ENCODE measurements at regions of chr4 and their contacts with region 1.

Region 1: GRCh38 chr4:168486961-168487305 is 6.6 kb upstream of the DDX60L start:
- DNase-seq: no peak
- H3K4me3 Mint-ChIP-seq: no peak overlapping the region
- H3K27ac Mint-ChIP-seq: no peak overlapping the region
- H3K4me1 Mint-ChIP-seq: peaks cover 36% of the 10 kb centered on the region
- H3K27me3 Mint-ChIP-seq: no peaks in the 10 kb centered on the region

Region 2: GRCh38 chr4:168498251-168498650 is 11.3 kb after region 1 on chr4:
- CTCF ChIA-PET with region 1: interaction called, 11 read pairs
- POLR2A ChIA-PET with region 1: no interaction called
- DNase-seq: no peak
- H3K4me3 Mint-ChIP-seq: no peak overlapping the region
- H3K27ac Mint-ChIP-seq: no peak overlapping the region
- H3K4me1 Mint-ChIP-seq: peaks cover 10% of the 10 kb centered on the region
- H3K27me3 Mint-ChIP-seq: peaks cover 15% of the 10 kb centered on the region

Region 3: DNA sequence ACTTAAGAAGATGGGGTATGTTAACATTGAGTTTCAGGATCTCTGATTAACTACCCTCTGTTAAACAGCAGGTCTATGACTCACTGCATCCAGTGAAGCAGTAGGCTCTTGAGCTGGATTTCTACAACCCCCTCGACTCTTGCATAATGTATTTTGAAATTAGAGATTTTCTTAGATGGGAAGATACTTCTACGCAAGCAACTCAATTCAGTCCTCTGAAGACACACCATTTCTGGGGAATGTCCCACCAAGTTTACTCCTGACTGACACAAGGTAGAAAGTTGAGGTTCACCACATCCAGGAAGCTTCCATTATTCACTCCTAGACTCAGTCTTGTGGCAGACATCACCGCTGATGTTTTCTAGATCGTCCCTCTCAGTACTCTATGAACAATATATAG is 22.9 kb after region 1 on chr4:
- CTCF ChIA-PET with region 1: interaction called, 13 read pairs
- POLR2A ChIA-PET with region 1: interaction called, 3 read pairs
- DNase-seq: peak; percentile 65
- H3K4me3 Mint-ChIP-seq: no peak overlapping the region
- H3K27ac Mint-ChIP-seq: peak overlapping the region; percentile 10
- H3K4me1 Mint-ChIP-seq: peaks cover 38% of the 10 kb centered on the region
- H3K27me3 Mint-ChIP-seq: no peaks in the 10 kb centered on the region

Measured in activated CD4-positive, alpha-beta T cell treated with anti-CD3 and anti-CD28 coated beads, Interleukin-2, amount 10 ng/mL, durations not matched to agents 7 days and 5 days (primary cell).